A673 (cell line): ENCODE measurements at regions of chr5 and their contacts with region 1.

Region 1: DNA sequence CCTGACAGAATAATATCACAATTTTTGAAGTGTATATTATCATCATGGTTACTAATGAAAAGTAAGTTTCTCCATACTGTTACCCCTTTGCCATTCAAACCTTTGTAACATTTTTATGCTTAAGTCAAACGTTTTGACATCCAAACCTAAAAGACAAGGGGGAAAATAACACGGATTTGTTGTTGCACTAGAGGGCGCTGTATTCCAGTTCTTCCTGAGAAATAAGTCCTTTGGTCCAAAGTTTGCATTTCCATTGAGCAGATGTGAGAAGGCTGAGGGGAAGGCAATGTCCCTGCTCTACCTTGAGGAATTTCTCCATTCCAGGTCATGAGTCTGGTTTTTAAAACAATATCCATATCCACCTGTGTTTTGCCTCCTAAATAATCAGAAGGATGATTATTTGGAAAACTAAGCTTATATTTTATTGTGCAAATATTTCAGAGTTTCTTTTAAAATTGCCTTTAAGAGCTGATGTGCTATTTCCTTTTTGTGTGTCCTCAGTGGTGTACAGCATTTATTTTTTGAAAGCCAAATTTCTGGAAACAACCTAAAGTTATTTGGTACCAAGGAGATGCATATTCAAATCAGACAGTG is 9.7 kb downstream of the LECT2 start:
- DNase-seq: peak; percentile 85
- H3K4me3 ChIP-seq: no peak overlapping the region
- H3K27ac ChIP-seq: no peak overlapping the region
- H3K4me1 ChIP-seq: no peaks in the 10 kb centered on the region
- H3K27me3 ChIP-seq: peaks cover 4% of the 10 kb centered on the region
- CTCF ChIP-seq: peak; percentile 83

Region 2: GRCh38 chr5:136062366-136063274 is 117.6 kb after region 1 on chr5:
- CTCF ChIA-PET with region 1: interaction called, 5 read pairs
- POLR2A ChIA-PET with region 1: no interaction called
- intact Hi-C with region 1: loop called (anchors 1 kb)
- DNase-seq: peak; percentile 63
- H3K4me3 ChIP-seq: no peak overlapping the region
- H3K27ac ChIP-seq: no peak overlapping the region
- H3K4me1 ChIP-seq: no peaks in the 10 kb centered on the region
- H3K27me3 ChIP-seq: no peaks in the 10 kb centered on the region
- CTCF ChIP-seq: peak; percentile 59

Region 3: GRCh38 chr5:136080483-136081216 is 135.6 kb after region 1 on chr5:
- CTCF ChIA-PET with region 1: no interaction called
- POLR2A ChIA-PET with region 1: no interaction called
- intact Hi-C with region 1: loop called (anchors 5 kb)
- DNase-seq: peak; percentile 77
- H3K4me3 ChIP-seq: peak overlapping the region; percentile 41
- H3K27ac ChIP-seq: no peak overlapping the region
- H3K4me1 ChIP-seq: no peaks in the 10 kb centered on the region
- H3K27me3 ChIP-seq: peaks cover 9% of the 10 kb centered on the region
- CTCF ChIP-seq: no peak

Region 4: GRCh38 chr5:136174021-136174659 is 229.1 kb after region 1 on chr5:
- CTCF ChIA-PET with region 1: no interaction called
- POLR2A ChIA-PET with region 1: no interaction called
- intact Hi-C with region 1: loop called (anchors 5 kb)
- DNase-seq: peak; percentile 63
- H3K4me3 ChIP-seq: no peak overlapping the region
- H3K27ac ChIP-seq: no peak overlapping the region
- H3K4me1 ChIP-seq: no peaks in the 10 kb centered on the region
- H3K27me3 ChIP-seq: no peaks in the 10 kb centered on the region
- CTCF ChIP-seq: peak; percentile 68

Region 5: GRCh38 chr5:137142764-137143605 is 1197.9 kb after region 1 on chr5:
- CTCF ChIA-PET with region 1: no interaction called
- POLR2A ChIA-PET with region 1: no interaction called
- intact Hi-C with region 1: no loop called
- DNase-seq: no peak
- H3K4me3 ChIP-seq: no peak overlapping the region
- H3K27ac ChIP-seq: no peak overlapping the region
- H3K4me1 ChIP-seq: peaks cover 7% of the 10 kb centered on the region
- H3K27me3 ChIP-seq: no peaks in the 10 kb centered on the region
- CTCF ChIP-seq: no peak